Endothelial cell of umbilical vein (primary cell): ENCODE measurements at regions of chr14 and their contacts with region 1.

Region 1: DNA sequence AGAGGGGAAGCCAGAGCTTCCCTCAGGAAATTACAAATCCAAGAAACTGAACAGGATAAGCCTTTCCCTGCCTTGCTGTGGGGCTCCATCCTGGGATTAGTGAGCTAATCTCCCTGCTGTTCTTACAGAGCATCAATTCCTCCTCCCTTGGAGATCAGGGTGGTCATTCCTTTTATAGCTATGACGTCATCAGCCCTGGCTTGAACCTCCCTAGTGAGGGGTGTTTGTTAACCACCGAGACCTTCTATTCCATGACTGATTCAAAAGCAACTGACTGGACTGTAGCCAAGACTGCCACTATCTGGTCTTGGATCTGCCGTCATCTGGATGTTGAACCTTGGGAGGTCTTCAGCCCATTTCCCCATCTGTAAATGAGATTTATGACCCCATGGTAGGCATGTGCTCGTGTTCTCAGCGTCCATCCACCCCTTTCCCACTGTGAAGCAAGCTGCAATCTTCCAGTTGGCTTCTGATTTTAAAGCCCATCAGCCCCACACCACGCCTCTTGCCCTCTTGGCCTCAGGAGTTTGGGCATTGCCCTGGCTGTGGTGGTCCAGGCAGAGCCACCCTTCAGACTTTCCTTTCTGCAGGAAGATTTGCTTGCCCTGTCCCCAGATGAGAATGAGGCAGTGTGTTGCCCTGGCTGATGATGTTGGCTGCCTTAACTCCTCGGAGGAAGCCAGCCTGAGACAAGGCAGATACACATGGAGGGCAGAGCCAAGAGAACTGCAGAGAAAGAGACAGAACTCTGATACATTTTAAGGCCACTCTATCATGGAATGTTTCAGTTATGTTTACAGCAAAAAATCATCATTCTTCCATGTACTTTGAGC is 59.6 kb upstream of the ACTN1 start:
- DNase-seq: peak; percentile 98
- H3K4me3 ChIP-seq: no peak overlapping the region
- H3K27ac ChIP-seq: peak overlapping the region; percentile 93
- H3K4me1 ChIP-seq: peaks cover 60% of the 10 kb centered on the region
- H3K27me3 ChIP-seq: no peaks in the 10 kb centered on the region
- CTCF ChIP-seq: no peak
- POLR2A ChIP-seq: no peak

Region 2: DNA sequence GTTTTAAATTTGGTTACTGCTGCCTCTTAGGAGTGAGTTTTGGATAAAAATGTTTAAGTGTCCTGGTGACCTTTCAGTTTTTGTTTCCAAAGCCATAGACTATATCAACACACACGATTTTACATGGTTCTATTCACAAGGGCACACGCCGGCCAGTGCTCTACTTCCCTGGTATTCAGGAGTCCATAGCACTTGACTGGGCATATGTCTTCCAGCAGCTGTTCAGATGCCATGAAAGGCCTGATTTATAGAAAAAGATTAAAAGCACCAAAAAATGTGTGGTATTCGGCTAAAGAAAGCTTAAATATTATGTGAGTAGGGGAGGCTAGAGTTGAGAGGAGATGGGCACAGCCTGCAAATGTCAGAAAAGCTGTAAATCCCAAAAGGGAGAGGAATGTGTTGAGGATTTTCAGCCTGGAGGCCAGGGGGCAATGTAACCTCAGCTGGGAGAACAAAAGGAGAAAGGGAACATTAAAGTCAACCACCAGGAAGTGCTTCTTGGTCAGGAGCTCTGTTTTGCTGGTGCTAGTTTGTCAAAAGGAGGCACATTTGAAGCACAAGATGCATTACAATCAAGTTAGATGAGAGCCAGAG is 740.7 kb before region 1 on chr14:
- CTCF ChIA-PET with region 1: no interaction called
- POLR2A ChIA-PET with region 1: no interaction called
- dilution Hi-C with region 1: no loop called
- intact Hi-C with region 1: no loop called
- DNase-seq: peak; percentile 58
- H3K4me3 ChIP-seq: no peak overlapping the region
- H3K27ac ChIP-seq: no peak overlapping the region
- H3K4me1 ChIP-seq: peaks cover 10% of the 10 kb centered on the region
- H3K27me3 ChIP-seq: no peaks in the 10 kb centered on the region
- CTCF ChIP-seq: peak; percentile 18 to 43
- POLR2A ChIP-seq: no peak

Region 3: GRCh38 chr14:68911594-68912227 is 127.0 kb before region 1 on chr14:
- CTCF ChIA-PET with region 1: interaction called, 8 read pairs
- POLR2A ChIA-PET with region 1: no interaction called
- dilution Hi-C with region 1: no loop called
- intact Hi-C with region 1: loop called (anchors 1 kb)
- DNase-seq: peak; percentile 76
- H3K4me3 ChIP-seq: no peak overlapping the region
- H3K27ac ChIP-seq: no peak overlapping the region
- H3K4me1 ChIP-seq: no peaks in the 10 kb centered on the region
- H3K27me3 ChIP-seq: no peaks in the 10 kb centered on the region
- CTCF ChIP-seq: peak; percentile 96 to 99
- POLR2A ChIP-seq: no peak

Region 4: DNA sequence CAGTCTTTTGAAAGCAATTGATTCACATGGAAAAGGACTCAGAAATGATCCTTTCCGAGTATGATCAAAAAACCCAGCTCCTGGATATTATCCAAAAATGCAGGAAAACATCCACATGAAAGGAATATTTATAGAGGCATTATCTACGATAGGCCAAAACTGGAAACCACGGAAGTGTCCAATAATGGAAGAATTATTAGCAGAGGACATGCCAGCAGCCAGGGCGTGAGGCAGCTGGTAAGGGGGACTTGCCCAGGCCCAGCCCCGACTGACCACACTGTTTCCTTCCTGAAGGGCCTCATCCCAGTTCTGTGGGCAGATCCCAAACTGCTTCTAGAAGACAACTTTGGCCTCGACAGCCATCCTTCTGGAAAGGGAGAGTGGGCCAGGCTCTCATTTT is 80.1 kb before region 1 on chr14:
- CTCF ChIA-PET with region 1: interaction called, 11 read pairs
- POLR2A ChIA-PET with region 1: no interaction called
- dilution Hi-C with region 1: no loop called
- intact Hi-C with region 1: no loop called
- DNase-seq: peak; percentile 89
- H3K4me3 ChIP-seq: no peak overlapping the region
- H3K27ac ChIP-seq: peak overlapping the region; percentile 56
- H3K4me1 ChIP-seq: peaks cover 62% of the 10 kb centered on the region
- H3K27me3 ChIP-seq: no peaks in the 10 kb centered on the region
- CTCF ChIP-seq: no peak
- POLR2A ChIP-seq: no peak

Region 5: GRCh38 chr14:69049675-69050074 is 11.0 kb after region 1 on chr14:
- CTCF ChIA-PET with region 1: interaction called, 25 read pairs
- POLR2A ChIA-PET with region 1: interaction called, 4 read pairs
- dilution Hi-C with region 1: no loop called
- intact Hi-C with region 1: no loop called
- DNase-seq: peak; percentile 96
- H3K4me3 ChIP-seq: no peak overlapping the region
- H3K27ac ChIP-seq: peak overlapping the region; percentile 69
- H3K4me1 ChIP-seq: peaks cover 78% of the 10 kb centered on the region
- H3K27me3 ChIP-seq: no peaks in the 10 kb centered on the region
- CTCF ChIP-seq: no peak
- POLR2A ChIP-seq: no peak

Region 6: DNA sequence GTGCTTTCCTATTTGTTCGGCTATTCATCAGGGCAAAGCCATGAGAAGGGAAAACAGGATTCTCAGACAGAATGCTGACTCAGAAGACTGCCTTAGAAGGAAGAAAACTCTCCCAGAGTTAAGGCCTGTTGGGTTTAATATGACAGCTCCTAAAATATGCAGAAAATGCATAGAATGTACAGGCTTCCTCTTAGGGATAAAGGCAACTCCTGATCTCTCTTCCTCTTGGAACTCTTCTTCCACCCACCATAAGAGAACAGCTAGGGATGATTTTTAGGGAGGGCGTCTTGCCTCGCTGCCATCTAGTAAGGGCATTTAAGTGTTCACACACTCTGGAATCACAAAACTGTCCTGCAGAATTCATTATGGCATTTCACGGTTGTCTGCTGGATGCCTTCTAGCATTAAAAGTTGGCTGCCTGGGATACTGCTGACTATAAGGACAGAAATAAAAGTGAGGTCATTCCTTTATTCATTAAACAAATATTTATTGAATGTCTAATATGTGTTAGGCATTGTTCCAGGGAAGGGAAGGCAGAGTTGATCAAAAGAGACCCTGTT is 40.6 kb after region 1 on chr14:
- CTCF ChIA-PET with region 1: interaction called, 6 read pairs
- POLR2A ChIA-PET with region 1: interaction called, 7 read pairs
- dilution Hi-C with region 1: no loop called
- intact Hi-C with region 1: loop called (anchors 1 kb)
- DNase-seq: peak; percentile 94
- H3K4me3 ChIP-seq: peak overlapping the region in 1 of 3 experiments; percentile 33
- H3K27ac ChIP-seq: peak overlapping the region; percentile 100
- H3K4me1 ChIP-seq: peaks cover 47% of the 10 kb centered on the region
- H3K27me3 ChIP-seq: no peaks in the 10 kb centered on the region
- CTCF ChIP-seq: no peak
- POLR2A ChIP-seq: no peak

Region 7: GRCh38 chr14:69101331-69101826 is 62.7 kb after region 1 on chr14:
- CTCF ChIA-PET with region 1: interaction called, 16 read pairs
- POLR2A ChIA-PET with region 1: no interaction called
- dilution Hi-C with region 1: no loop called
- intact Hi-C with region 1: loop called (anchors 2 kb)
- DNase-seq: peak; percentile 80
- H3K4me3 ChIP-seq: no peak overlapping the region
- H3K27ac ChIP-seq: peak overlapping the region; percentile 16
- H3K4me1 ChIP-seq: peaks cover 19% of the 10 kb centered on the region
- H3K27me3 ChIP-seq: no peaks in the 10 kb centered on the region
- CTCF ChIP-seq: peak; percentile 61 to 70
- POLR2A ChIP-seq: no peak

Region 8: DNA sequence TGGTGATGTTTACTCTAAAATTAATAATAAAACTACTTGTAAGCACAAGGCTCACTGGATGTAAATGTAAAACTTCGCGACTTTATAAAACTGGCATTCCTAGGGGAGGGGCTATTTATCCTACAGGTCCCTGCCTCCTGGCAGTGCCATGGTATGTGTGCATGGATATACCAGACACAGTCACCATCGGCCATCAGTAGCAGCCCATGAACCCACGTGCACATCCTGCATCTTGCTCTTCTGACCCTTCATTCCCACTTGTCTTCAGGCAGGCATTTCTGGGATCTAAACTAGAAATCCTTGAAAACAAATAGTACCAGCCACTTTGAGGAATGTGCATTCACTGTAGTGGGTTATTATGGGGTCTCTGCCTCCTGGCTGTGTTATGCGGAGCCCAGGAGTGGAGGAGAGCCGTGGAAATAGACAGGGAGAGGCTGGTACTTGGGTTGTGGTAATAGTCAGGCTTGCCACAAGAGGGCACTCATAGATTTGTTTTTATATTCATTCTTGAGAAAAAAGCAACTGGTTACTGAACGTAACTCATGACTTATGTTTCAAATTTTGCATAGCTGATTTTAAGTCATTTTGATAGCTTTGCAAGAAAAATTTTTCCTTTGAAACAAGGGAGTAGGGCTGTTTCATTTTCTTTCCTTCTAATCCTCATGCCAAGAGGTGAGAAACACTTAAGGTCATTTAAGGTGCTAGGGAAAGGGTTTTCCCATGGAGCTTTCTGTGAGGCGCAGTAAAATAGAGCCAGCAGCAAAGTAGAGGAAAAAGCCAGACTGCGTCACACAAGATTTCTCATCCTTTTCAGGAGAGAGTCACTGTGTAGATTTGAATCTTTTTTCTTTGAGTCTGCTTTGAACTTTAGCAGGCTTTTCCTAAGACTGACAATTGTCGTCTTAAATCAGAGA is 203.9 kb after region 1 on chr14:
- CTCF ChIA-PET with region 1: no interaction called
- POLR2A ChIA-PET with region 1: no interaction called
- dilution Hi-C with region 1: no loop called
- intact Hi-C with region 1: no loop called
- DNase-seq: peak; percentile 71
- H3K4me3 ChIP-seq: no peak overlapping the region
- H3K27ac ChIP-seq: no peak overlapping the region
- H3K4me1 ChIP-seq: no peaks in the 10 kb centered on the region
- H3K27me3 ChIP-seq: no peaks in the 10 kb centered on the region
- CTCF ChIP-seq: peak; percentile 59 to 60
- POLR2A ChIP-seq: no peak